ENCODE measurements at regions of chr11 and their contacts with region 1.

Region 1: DNA sequence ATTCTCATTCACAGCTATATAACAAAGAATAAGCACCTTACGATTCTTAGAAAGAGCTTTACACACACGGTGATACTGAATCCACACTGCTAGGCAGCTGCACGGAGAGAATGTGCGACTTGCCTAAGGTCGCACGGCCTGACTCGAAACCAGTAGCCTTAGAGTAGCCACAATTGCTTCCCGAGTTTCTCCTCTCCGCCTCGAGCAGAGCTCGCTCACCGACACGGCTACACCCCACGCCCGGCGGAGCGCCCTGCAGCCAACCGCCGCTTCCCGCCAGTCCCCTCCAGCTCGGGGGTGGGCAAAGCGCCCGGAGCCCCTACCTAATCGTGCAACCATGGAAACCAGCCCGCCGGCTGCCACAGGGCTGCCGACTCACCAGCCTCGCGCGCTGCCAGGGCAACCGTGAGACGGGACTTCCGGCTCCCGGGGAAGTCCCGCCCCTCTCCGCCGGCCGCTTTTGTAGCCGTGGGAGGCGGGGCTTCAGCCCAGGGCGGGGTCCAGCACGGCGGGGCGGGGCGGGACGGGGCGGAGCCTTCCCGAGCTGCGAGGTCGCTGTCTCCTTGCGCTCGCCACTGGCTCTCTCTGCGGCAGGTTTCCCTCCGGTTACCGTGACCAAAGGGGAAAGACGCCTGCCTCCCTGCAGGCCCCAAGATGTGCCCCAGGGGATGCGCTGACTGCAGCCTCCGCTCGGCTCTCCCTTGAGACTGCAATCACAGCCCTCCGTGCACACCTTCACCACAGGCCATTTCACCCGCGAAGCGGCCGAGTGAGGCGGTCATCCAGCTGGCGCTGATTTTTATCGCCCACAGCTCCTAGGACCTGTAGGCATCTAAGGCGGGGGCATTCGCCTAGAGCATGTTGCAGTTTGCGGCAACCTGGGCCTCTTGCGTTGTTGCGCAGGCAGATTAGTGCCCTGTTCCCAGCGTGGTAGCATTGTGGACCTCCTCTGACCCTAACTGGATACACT is 1.1 kb downstream of the BSCL2 start:
- DNase-seq: peak; percentile 95
- ATAC-seq: peak; percentile 73
- H3K4me3 ChIP-seq: peak overlapping the region; percentile 65 to 86 (median 69)
- H3K4me3 Mint-ChIP-seq: peak overlapping the region; percentile 92
- H3K27ac ChIP-seq: peak overlapping the region; percentile 61 to 91
- H3K27ac Mint-ChIP-seq: peak overlapping the region; percentile 91
- H3K4me1 ChIP-seq: peaks cover 39 to 50% of the 10 kb centered on the region in 2 donors
- H3K4me1 Mint-ChIP-seq: peaks cover 51% of the 10 kb centered on the region
- H3K27me3 ChIP-seq: no peaks in the 10 kb centered on the region
- H3K27me3 Mint-ChIP-seq: no peaks in the 10 kb centered on the region
- CTCF ChIP-seq: no peak

Region 2: DNA sequence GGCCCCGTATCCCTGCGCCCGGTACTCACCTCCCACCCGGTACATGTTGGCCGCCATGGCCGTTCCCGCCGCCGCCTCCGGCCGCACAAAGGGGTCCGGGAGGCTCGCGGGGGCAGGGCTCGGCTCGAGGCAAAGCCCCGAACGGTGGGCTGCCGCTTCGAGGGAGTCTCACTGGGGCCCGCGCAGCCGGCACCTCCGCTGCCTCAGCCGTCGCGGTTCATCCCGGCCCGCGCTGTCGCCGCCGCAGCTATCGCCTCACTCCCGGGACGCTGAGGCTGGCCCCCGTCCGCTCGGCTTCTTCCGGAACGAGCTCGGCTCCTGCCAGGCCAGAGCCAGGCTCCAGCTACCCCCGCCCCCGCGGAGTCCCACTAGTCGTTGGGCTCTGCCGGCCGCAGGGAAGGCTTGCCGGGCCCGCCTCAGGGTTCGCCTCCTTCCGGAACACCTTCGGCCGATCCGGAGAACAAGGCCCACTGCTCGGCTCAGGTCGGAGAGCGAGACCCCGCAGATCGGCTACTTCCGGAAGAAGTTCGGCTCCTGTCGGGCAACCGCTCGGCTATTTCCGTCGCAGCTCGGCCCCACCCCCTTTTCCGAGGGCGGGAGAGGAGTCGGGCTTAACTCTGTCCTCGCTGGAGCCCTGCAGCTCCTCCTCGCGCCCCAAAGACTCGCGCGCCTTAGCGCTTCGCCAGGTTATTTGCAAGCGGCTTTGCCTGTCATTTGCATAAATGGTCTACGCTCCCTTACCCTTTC is 104.6 kb before region 1 on chr11 and contains the start of gene MTA2:
- CTCF ChIA-PET with region 1: no interaction called
- POLR2A ChIA-PET with region 1: interaction called, 11 read pairs
- intact Hi-C with region 1: no loop called
- DNase-seq: peak; percentile 99
- ATAC-seq: peak; percentile 78
- H3K4me3 ChIP-seq: peak within 1 kb of the TSS; percentile 82 to 97 (median 86)
- H3K4me3 Mint-ChIP-seq: peak within 1 kb of the TSS; percentile 97
- H3K27ac ChIP-seq: peak within 1 kb of the TSS; percentile 78 to 90
- H3K27ac Mint-ChIP-seq: peak within 1 kb of the TSS; percentile 96
- H3K4me1 ChIP-seq: peaks cover 24 to 40% of the 10 kb centered on the region in 2 donors
- H3K4me1 Mint-ChIP-seq: peaks cover 46% of the 10 kb centered on the region
- H3K27me3 ChIP-seq: no peaks in the 10 kb centered on the region
- H3K27me3 Mint-ChIP-seq: no peaks in the 10 kb centered on the region
- CTCF ChIP-seq: no peak
- total RNA-seq, gene MTA2: 127 and 139 TPM in 2 replicates

Region 3: GRCh38 chr11:62645956-62646824 is 60.0 kb before region 1 on chr11 and contains the start of gene GANAB:
- CTCF ChIA-PET with region 1: interaction called, 4 read pairs
- POLR2A ChIA-PET with region 1: interaction called, 3 read pairs
- intact Hi-C with region 1: loop called (anchors 1 kb)
- DNase-seq: peak; percentile 97
- ATAC-seq: peak; percentile 99
- H3K4me3 ChIP-seq: peak within 1 kb of the TSS; percentile 54 to 98 (median 90)
- H3K4me3 Mint-ChIP-seq: peak within 1 kb of the TSS; percentile 97
- H3K27ac ChIP-seq: peak within 1 kb of the TSS; percentile 75 to 89
- H3K27ac Mint-ChIP-seq: peak within 1 kb of the TSS; percentile 95
- H3K4me1 ChIP-seq: peaks cover 14 to 21% of the 10 kb centered on the region in 2 donors
- H3K4me1 Mint-ChIP-seq: peaks cover 26% of the 10 kb centered on the region
- H3K27me3 ChIP-seq: no peaks in the 10 kb centered on the region
- H3K27me3 Mint-ChIP-seq: no peaks in the 10 kb centered on the region
- CTCF ChIP-seq: no peak
- total RNA-seq, gene GANAB: 190 and 204 TPM in 2 replicates

Region 4: DNA sequence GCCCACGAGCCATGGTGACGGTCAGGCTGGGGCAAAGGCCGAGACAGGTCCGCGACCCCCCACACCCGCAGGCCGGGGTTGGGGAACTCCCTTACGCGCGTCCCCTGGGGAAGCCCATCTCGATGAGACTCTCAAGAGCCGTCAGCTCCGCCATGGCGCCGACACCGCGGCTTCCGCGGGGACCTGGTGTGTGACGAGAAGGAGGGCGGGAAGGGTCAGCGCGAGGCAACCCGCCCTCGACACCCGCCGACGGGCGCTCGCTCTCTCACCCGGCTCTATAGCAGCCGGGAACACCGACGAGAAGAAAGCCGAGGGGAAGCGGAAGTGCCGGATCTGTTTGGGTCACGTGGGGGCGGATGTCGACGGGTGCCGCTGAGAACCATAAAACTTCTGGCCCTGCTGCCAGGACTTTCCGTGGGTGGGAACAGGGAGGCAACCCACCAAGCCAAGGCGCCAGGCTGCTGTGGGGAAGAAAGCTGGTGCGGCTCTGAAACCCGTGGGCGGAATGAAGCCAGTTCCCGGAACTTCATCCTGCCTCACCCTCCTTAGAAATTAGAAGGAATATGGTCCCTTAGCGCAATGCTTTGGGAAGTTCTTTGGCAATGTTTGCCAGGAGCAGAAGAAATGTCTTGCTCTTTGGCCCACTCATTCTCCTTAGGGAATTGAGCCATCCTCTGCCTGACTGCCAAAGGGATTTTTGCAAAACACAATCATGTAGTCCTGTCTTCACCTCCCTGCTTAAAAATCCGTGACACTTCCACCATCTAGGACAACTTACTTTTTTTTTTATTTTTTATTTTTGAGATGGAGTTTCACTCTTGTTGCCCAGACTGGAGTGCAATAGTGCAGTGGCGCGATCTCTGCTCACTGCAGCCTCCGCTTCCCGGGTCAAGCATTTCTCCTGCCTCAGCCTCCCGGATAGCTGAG is 27.1 kb before region 1 on chr11 and contains the start of gene UBXN1:
- CTCF ChIA-PET with region 1: interaction called, 6 read pairs
- POLR2A ChIA-PET with region 1: interaction called, 5 read pairs
- intact Hi-C with region 1: loop called (anchors 1 kb)
- DNase-seq: peak; percentile 92
- ATAC-seq: peak; percentile 77
- H3K4me3 ChIP-seq: peak within 1 kb of the TSS; percentile 71 to 99 (median 98)
- H3K4me3 Mint-ChIP-seq: peak within 1 kb of the TSS; percentile 88
- H3K27ac ChIP-seq: peak within 1 kb of the TSS; percentile 83 to 99
- H3K27ac Mint-ChIP-seq: peak within 1 kb of the TSS; percentile 93
- H3K4me1 ChIP-seq: peaks cover 9 to 20% of the 10 kb centered on the region in 2 donors
- H3K4me1 Mint-ChIP-seq: peaks cover 34% of the 10 kb centered on the region
- H3K27me3 ChIP-seq: no peaks in the 10 kb centered on the region
- H3K27me3 Mint-ChIP-seq: no peaks in the 10 kb centered on the region
- CTCF ChIP-seq: no peak
- total RNA-seq, gene UBXN1: 186 and 193 TPM in 2 replicates

Region 5: DNA sequence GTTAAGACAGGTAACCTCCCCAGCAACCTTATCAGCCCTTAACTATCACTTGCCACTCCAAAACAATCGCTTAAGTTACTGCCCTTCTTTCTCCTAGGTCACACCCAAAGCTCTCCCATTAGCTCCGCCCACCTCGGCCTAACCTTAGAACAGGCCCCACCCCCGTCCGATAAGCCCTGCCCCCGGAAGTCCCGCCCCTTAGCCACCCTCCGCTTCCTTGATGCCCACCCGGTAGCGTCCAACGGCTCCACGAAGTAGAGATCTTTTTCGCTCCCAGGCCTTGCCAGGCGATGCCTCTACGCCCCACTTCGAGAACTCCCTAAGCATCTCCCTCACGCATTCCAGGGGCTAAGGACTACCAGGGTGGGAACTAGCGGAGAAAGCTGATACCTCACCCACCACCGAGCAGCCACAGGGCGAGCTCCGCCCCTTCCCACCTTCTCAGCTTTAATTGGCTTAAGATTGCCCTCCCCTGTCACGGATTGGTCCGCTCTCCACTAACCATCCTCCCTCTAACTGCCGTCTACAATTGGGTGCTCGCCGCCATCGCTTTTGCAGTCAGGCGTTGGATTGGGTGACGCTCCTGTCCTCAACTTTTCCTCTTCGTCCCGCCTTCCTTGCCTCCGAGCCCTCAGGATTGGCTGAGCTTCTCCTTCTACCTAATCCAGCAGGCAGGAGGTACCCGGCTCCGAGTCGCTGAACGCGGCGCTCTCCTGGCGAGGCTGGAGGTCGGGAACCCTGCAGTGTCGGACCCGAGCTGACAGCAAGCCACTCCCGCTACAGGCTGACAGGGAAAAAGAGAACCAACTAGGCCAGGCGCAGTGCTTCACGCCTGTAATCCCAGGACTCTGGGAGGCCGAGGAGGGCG is 47.8 kb after region 1 on chr11 and contains the start of gene ZBTB3:
- CTCF ChIA-PET with region 1: interaction called, 3 read pairs
- POLR2A ChIA-PET with region 1: interaction called, 19 read pairs
- intact Hi-C with region 1: loop called (anchors 1 kb)
- DNase-seq: peak; percentile 99
- ATAC-seq: peak; percentile 92
- H3K4me3 ChIP-seq: peak within 1 kb of the TSS; percentile 82 to 94 (median 86)
- H3K4me3 Mint-ChIP-seq: peak within 1 kb of the TSS; percentile 99
- H3K27ac ChIP-seq: peak within 1 kb of the TSS; percentile 80 to 84
- H3K27ac Mint-ChIP-seq: peak within 1 kb of the TSS; percentile 99
- H3K4me1 ChIP-seq: peaks cover 7 to 21% of the 10 kb centered on the region in 2 donors
- H3K4me1 Mint-ChIP-seq: peaks cover 27% of the 10 kb centered on the region
- H3K27me3 ChIP-seq: no peaks in the 10 kb centered on the region
- H3K27me3 Mint-ChIP-seq: no peaks in the 10 kb centered on the region
- CTCF ChIP-seq: no peak
- total RNA-seq, gene ZBTB3: 22.0 and 24.8 TPM in 2 replicates

Region 6: GRCh38 chr11:62841361-62842184 is 135.4 kb after region 1 on chr11:
- CTCF ChIA-PET with region 1: no interaction called
- POLR2A ChIA-PET with region 1: interaction called, 34 read pairs
- intact Hi-C with region 1: no loop called
- DNase-seq: peak; percentile 95
- ATAC-seq: peak; percentile 58
- H3K4me3 ChIP-seq: peak overlapping the region; percentile 61 to 97 (median 91)
- H3K4me3 Mint-ChIP-seq: no peak overlapping the region
- H3K27ac ChIP-seq: peak overlapping the region; percentile 99 to 100
- H3K27ac Mint-ChIP-seq: no peak overlapping the region
- H3K4me1 ChIP-seq: peaks cover 14 to 33% of the 10 kb centered on the region in 2 donors
- H3K4me1 Mint-ChIP-seq: peaks cover 18% of the 10 kb centered on the region
- H3K27me3 ChIP-seq: no peaks in the 10 kb centered on the region
- H3K27me3 Mint-ChIP-seq: no peaks in the 10 kb centered on the region
- CTCF ChIP-seq: no peak